IMR-90 (cell line): ENCODE measurements at regions of chr20 and their contacts with region 1.

Region 1: GRCh38 chr20:40997116-40997515 is 31.5 kb upstream of the TOP1 start:
- DNase-seq: no peak
- ATAC-seq: no peak
- H3K4me3 ChIP-seq: no peak overlapping the region
- H3K27ac ChIP-seq: no peak overlapping the region
- H3K4me1 ChIP-seq: peaks cover under 1% of the 10 kb centered on the region
- H3K27me3 ChIP-seq: no peaks in the 10 kb centered on the region
- CTCF ChIP-seq: no peak
- POLR2A ChIP-seq: no peak
- RAD21 ChIP-seq: no peak

Region 2: DNA sequence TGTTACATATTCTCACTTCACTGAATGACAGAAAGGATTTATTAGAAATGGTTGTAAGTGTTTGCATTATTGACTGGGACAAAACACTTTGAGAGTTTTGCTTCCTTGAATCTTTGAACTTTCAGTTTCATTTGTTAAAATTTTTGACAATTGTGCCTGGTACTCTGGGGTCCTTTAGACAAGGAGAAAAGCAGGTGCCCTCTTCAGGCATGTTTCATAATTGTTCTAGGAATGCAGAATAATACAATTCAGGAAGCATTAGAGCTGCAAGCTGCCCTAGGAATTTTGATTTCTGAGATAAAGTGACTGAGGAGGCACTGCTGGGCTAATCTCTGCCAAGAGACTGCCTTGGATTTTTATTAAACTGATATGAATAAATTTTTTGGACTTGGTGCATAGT is 81.2 kb after region 1 on chr20:
- CTCF ChIA-PET with region 1: interaction called, 26 read pairs
- POLR2A ChIA-PET with region 1: no interaction called
- dilution Hi-C with region 1: no loop called
- in situ Hi-C with region 1: no loop called
- intact Hi-C with region 1: no loop called
- DNase-seq: peak; percentile 53
- ATAC-seq: peak; percentile 55
- H3K4me3 ChIP-seq: no peak overlapping the region
- H3K27ac ChIP-seq: no peak overlapping the region
- H3K4me1 ChIP-seq: peaks cover 14% of the 10 kb centered on the region
- H3K27me3 ChIP-seq: no peaks in the 10 kb centered on the region
- CTCF ChIP-seq: peak; percentile 61
- POLR2A ChIP-seq: no peak
- RAD21 ChIP-seq: peak; percentile 66